Breast epithelium (tissue), 4 donors: ENCODE measurements at regions of chr3 and their contacts with region 1.

Region 1: GRCh38 chr3:46500656-46501635 is 3.2 kb downstream of the RTP3 start:
- DNase-seq: no peak
- H3K4me3 ChIP-seq: no peak overlapping the region
- H3K27ac ChIP-seq: no peak overlapping the region
- H3K4me1 ChIP-seq: no peaks in the 10 kb centered on the region
- H3K27me3 ChIP-seq: no peaks in the 10 kb centered on the region
- CTCF ChIP-seq: no peak
- POLR2A ChIP-seq: no peak

Region 2: GRCh38 chr3:46629551-46630517 is 128.9 kb after region 1 on chr3:
- intact Hi-C with region 1: loop called (anchors 10 kb)
- DNase-seq: peak; percentile 64 to 73
- H3K4me3 ChIP-seq: peak overlapping the region; percentile 14 to 60 (median 41)
- H3K27ac ChIP-seq: peak overlapping the region; percentile 68 to 76
- H3K4me1 ChIP-seq: no peaks in the 10 kb centered on the region
- H3K27me3 ChIP-seq: no peaks in the 10 kb centered on the region
- CTCF ChIP-seq: peak; percentile 50 to 92 (median 92)
- POLR2A ChIP-seq: no peak

Region 3: GRCh38 chr3:47133641-47134040 is 632.7 kb after region 1 on chr3:
- intact Hi-C with region 1: no loop called
- DNase-seq: no peak
- H3K4me3 ChIP-seq: no peak overlapping the region
- H3K27ac ChIP-seq: no peak overlapping the region
- H3K4me1 ChIP-seq: no peaks in the 10 kb centered on the region
- H3K27me3 ChIP-seq: no peaks in the 10 kb centered on the region
- CTCF ChIP-seq: no peak
- POLR2A ChIP-seq: no peak